G401 (cell line): ENCODE measurements at regions of chr17 and their contacts with region 1.

Region 1: GRCh38 chr17:45677770-45678169 is 106.3 kb upstream of the CRHR1 start:
- DNase-seq: peak; percentile 29

Region 2: GRCh38 chr17:45852535-45853297 is 174.9 kb after region 1 on chr17:
- in situ Hi-C with region 1: loop called (anchors 25 kb)
- DNase-seq: peak; percentile 89